Right ventricle myocardium inferior (tissue), 1 donor: ENCODE measurements at regions of chr9 and their contacts with region 1.

Region 1: DNA sequence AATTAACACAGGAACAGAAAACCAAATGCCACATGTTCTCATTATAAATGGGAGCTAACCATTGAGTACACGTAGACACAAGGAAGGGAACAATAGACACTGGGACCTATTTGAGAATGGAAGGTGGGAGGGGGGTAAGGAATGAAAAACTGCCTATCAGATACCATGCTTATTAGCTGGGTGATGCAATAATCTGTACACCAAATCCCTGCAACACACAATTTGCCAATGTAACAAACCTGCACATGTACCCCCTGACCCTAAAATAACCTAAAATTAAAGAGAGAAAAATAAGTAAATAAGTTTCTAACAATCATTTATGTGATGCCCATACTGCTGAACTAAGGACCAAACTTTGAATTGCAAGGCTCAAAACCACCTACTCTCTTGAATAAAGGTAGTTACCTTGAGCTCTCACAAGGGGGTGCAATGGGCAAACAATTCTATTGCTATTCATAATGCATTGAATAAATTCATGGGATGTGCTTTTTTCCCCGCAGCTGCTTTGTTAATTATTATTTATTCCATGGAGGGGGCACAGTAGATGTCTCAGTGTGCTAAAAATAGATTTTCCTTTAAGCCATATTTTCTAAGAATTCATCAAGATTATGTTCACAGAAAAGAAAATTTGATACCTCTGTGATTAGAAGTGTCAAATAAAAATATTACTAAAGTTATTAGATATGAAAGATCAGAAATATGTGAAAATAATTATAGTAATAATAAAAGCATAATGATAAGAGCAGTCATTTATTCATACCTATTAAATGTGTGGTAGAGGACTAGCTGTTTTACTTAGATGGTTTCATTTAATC is 76.2 kb upstream of the PTPN3 start:
- DNase-seq: no peak
- ATAC-seq: peak; percentile 64

Region 2: GRCh38 chr9:109600144-109600543 is 25.9 kb after region 1 on chr9:
- intact Hi-C with region 1: no loop called
- DNase-seq: no peak
- ATAC-seq: no peak

Region 3: DNA sequence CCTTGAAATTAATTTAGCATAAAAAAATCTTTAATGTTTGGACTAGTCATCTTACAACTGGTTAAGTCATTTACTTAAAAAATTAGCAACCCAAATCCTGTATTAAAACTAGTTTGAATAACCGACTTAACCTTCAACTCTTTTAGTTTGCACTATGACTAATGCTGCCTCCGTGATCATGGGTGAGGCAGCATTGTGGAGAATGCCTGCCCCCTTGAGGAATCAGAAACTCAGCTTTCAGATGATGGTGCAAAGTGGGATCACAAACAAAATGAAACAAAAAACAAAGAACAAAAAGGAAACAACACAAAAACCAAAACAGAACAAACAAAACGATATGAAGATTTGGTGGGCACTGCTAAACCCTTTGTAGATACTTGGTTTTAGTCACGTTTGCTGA is 78.7 kb after region 1 on chr9:
- intact Hi-C with region 1: loop called (anchors 1 kb)
- DNase-seq: no peak
- ATAC-seq: peak; percentile 59

Region 4: GRCh38 chr9:109699019-109699418 is 124.7 kb after region 1 on chr9:
- intact Hi-C with region 1: no loop called
- DNase-seq: no peak
- ATAC-seq: no peak

Region 5: DNA sequence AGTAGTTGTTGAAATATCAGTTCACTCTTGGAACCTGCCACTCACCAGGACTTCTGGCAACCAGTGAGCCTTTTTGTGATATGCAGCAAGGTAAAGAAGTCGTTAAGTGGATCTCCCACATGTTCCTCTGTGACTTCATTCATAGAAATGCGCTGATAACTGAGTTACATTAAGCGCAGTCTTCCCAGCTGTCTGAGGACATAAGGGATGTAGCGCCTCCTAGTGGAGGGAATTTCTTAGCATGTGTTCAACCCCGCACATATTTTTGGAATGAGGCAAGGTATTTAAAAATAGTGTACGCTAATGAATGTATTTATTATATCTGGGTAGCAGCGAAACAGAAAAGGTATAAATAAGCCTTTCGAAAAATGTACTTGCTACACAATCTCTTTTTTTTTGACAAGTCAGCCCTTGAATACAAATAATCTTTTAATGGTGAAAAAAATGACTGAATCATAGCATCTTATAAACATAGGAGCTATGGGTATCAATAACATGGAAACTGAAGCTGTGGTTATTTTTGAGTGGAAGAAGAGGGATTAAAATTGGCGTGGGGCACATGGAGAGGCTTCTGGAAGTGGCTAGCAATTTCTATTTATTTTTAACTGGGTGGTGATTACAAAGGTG is 243.7 kb after region 1 on chr9:
- intact Hi-C with region 1: loop called (anchors 5 kb)
- DNase-seq: no peak
- ATAC-seq: peak; percentile 81

Region 6: GRCh38 chr9:109903515-109904138 is 329.4 kb after region 1 on chr9:
- intact Hi-C with region 1: loop called (anchors 5 kb)
- DNase-seq: no peak
- ATAC-seq: peak; percentile 56

Region 7: GRCh38 chr9:110152704-110153374 is 578.6 kb after region 1 on chr9:
- intact Hi-C with region 1: loop called (anchors 10 kb)
- DNase-seq: no peak
- ATAC-seq: no peak